Posterior cingulate gyrus (tissue), 11 donors: ENCODE measurements at regions of chr10 and their contacts with region 1.

Region 1: GRCh38 chr10:71319042-71319799 is at the start of gene SLC29A3:
- DNase-seq: peak; percentile 59 to 97 (median 83)

Region 2: GRCh38 chr10:71375952-71376351 is 56.7 kb after region 1 on chr10:
- intact Hi-C with region 1: loop called (anchors 2 kb)
- DNase-seq: peak in 2 of 10 donors; percentile 1 to 53

Region 3: GRCh38 chr10:71459513-71459912 is 140.3 kb after region 1 on chr10:
- intact Hi-C with region 1: no loop called
- DNase-seq: no peak

Region 4: DNA sequence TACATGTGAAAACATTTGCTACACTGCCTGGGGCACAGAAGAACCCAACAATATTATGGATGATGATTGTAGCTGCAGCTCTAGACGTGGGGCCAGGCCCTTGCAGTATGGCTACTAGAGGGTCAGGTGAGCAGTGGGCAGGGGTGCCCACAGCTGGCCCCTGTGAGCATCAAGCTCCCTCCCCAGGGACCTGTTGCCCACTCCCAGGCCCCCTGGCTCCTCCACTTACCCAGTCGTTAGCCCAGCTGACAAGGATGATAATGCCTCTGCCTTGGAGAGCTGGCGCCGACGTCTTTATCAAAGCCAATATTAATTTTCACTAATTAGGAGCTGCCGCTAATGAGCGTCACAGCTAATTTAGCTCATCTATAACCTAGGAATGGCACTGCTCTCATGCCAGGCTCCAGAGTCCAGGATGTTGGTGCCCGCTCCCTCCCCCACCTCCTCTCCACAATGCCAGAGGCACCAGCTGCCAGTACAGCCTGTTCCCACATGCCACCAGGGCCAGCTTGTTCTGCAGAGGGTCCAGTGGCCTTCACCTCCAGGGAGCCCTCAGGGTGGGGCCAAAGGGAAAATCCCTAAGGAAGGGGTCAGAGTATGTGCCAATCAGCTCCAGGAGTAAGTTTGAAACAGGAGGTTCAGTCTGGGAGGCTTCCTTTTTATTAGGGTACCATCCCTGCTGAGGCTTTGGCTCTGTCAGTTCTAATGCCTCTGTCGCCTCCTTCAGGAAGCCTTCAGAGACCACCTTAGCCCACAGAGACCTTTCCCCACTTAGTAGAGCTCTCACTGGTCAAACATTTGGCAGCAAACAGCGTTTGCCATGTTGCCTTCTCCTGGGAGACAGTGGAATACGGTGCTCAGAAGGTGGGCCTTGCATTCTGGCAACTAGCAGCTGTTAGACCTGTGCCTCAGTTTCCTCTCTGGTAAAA is 154.7 kb after region 1 on chr10:
- intact Hi-C with region 1: no loop called
- DNase-seq: peak in 4 of 10 donors; percentile 21 to 80 (median 71)

Region 5: GRCh38 chr10:71708301-71708703 is 389.1 kb after region 1 on chr10:
- intact Hi-C with region 1: loop called (anchors 2 kb)
- DNase-seq: peak; percentile 37 to 95 (median 74)